Mammary epithelial cell (primary cell): ENCODE measurements at regions of chr19 and their contacts with region 1.

Region 1: GRCh38 chr19:58543826-58544590 is at the start of gene TRIM28:
- DNase-seq: peak; percentile 99
- H3K4me3 ChIP-seq: peak within 1 kb of the TSS; percentile 69 to 90 (median 86)
- H3K27ac ChIP-seq: peak within 1 kb of the TSS; percentile 82
- H3K4me1 ChIP-seq: peaks cover 9% of the 10 kb centered on the region
- H3K27me3 ChIP-seq: no peaks in the 10 kb centered on the region
- CTCF ChIP-seq: no peak
- total RNA-seq, gene TRIM28: 180 to 331 TPM

Region 2: DNA sequence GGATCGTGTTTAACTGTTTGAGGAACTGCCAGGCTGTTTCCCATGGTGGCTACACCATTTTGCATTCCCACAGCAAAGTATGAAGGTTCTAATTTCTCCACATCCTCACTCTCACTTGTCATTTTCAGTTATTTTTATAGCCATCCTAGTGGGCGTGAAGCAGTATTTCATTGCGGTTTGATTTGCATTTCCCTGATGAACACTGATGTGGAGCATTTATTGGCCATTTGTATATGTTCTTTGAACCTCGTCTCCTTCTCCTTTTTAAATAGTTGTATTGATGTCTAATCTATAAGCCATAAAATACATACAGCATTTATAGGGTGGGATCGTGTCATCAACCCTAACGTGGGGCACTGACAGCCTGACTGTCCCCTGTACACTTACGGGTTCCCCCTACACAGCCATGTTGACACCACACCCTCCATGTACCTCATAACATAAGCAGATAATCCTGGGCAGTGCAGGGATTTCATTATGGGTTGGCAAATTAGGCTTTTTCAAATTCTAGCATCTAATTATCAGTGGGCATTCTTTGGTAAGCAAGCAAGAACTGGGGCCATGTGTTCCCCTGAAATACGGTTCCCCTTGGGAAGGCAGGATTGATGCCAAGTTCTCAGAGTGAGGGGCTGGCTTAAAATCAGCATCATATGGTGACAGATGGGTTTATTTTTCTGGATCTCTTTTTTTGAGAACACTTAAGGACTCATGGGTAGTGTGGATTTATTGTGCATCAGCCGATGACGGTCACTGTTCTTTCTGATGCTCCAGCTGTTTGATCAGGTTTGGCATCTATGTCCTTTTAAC is 12.8 kb before region 1 on chr19:
- CTCF ChIA-PET with region 1: no interaction called
- dilution Hi-C with region 1: no loop called
- in situ Hi-C with region 1: no loop called
- intact Hi-C with region 1: no loop called
- DNase-seq: no peak
- H3K4me3 ChIP-seq: no peak overlapping the region
- H3K27ac ChIP-seq: no peak overlapping the region
- H3K4me1 ChIP-seq: no peaks in the 10 kb centered on the region
- H3K27me3 ChIP-seq: no peaks in the 10 kb centered on the region
- CTCF ChIP-seq: no peak

Region 3: DNA sequence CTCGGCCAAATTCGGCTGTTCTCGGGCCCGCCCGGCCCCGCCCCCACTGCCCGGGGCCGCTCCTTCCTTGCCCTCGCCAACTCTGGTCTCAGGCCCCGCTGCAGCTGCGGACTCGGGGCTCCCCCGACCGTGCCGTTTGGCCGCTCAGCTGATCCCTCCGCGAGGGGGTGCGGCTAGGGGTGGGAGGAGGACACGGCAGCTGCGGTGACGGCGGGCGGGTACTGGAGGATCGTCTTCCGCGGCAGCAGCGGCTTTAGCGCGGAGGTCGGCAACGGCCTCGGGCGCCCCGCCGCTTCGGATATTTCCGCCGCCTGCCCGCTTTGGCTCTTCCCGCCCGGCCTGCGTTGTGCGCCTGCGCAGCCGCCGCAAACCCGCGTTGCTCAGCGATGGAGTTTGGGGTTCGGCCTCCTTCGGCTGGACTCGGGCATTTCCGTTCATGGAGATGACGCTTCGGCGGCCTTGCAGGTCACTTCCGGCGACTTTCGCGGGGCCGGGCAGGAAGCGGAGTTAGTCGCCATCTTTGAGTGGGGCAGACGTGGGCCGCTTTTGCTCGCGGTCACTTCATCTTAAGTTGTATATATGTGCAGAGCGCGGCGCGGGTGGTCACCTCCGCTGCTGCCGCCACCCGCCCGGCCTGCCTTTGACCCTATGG is 14.7 kb after region 1 on chr19:
- CTCF ChIA-PET with region 1: no interaction called
- dilution Hi-C with region 1: no loop called
- in situ Hi-C with region 1: no loop called
- intact Hi-C with region 1: loop called (anchors 1 kb)
- DNase-seq: peak; percentile 97
- H3K4me3 ChIP-seq: peak overlapping the region; percentile 70 to 88 (median 81)
- H3K27ac ChIP-seq: peak overlapping the region; percentile 91
- H3K4me1 ChIP-seq: peaks cover 50% of the 10 kb centered on the region
- H3K27me3 ChIP-seq: no peaks in the 10 kb centered on the region
- CTCF ChIP-seq: no peak

Region 4: DNA sequence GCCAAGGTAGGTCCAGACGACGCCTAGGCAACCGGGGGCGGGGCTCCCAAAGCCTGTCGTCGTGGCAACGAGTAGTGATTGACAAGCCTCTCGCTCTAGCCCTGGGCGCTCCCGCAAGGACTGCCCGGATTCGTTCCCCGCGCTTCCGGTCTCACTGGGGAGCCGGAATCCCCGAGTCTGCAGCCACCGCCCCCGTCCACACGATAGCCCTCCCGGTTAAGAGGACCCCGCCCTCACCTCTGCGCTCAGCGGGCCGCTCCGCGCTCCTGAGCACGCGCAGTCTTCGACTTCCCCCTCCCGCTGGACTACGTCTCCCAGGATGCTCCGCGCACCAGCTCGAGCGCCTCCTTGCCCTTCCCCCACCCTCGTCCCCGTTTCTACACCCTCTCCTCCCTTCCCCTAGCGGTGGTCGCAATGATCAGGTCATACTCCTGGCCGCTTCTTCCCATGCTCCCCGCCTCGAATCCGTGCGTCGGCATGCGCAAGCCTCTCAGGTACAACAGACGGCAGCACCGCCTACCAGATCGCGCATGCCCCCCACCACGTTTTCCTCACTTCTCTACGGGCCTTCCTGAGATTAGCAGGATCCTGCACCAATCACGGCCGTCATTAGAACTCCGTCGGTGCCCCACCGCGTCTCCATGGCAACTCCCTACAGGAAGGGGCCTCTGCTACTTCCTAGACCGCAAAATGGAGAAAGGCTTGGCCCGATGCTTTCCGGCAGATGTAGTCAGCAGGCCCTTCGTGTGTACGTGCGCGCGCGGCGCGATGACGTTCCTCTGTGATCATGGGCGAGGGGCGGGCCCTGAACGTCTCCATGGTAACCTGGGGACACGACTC is 29.0 kb after region 1 on chr19 and contains the start of gene MZF1:
- CTCF ChIA-PET with region 1: no interaction called
- dilution Hi-C with region 1: no loop called
- in situ Hi-C with region 1: no loop called
- intact Hi-C with region 1: loop called (anchors 1 kb)
- DNase-seq: peak; percentile 100
- H3K4me3 ChIP-seq: peak within 1 kb of the TSS; percentile 66 to 99 (median 85)
- H3K27ac ChIP-seq: peak within 1 kb of the TSS; percentile 99
- H3K4me1 ChIP-seq: peaks cover 14% of the 10 kb centered on the region
- H3K27me3 ChIP-seq: no peaks in the 10 kb centered on the region
- CTCF ChIP-seq: peak in 1 of 2 donors; percentile 16
- total RNA-seq, gene MZF1: 16.7 to 21.5 TPM